Esophagus muscularis mucosa (tissue), 4 donors: ENCODE measurements at regions of chr2 and their contacts with region 1.

Region 1: GRCh38 chr2:239401067-239401880 is 454 bp upstream of the HDAC4 start:
- DNase-seq: peak; percentile 100
- H3K4me3 ChIP-seq: peak overlapping the region; percentile 57 to 86 (median 76)
- H3K27ac ChIP-seq: peak overlapping the region; percentile 97 to 100 (median 100)
- H3K4me1 ChIP-seq: peaks cover 31 to 47% (median 42%) of the 10 kb centered on the region in 4 donors
- H3K27me3 ChIP-seq: no peaks in the 10 kb centered on the region
- CTCF ChIP-seq: no peak
- EP300 ChIP-seq: no peak
- POLR2A ChIP-seq: peak; percentile 97

Region 2: DNA sequence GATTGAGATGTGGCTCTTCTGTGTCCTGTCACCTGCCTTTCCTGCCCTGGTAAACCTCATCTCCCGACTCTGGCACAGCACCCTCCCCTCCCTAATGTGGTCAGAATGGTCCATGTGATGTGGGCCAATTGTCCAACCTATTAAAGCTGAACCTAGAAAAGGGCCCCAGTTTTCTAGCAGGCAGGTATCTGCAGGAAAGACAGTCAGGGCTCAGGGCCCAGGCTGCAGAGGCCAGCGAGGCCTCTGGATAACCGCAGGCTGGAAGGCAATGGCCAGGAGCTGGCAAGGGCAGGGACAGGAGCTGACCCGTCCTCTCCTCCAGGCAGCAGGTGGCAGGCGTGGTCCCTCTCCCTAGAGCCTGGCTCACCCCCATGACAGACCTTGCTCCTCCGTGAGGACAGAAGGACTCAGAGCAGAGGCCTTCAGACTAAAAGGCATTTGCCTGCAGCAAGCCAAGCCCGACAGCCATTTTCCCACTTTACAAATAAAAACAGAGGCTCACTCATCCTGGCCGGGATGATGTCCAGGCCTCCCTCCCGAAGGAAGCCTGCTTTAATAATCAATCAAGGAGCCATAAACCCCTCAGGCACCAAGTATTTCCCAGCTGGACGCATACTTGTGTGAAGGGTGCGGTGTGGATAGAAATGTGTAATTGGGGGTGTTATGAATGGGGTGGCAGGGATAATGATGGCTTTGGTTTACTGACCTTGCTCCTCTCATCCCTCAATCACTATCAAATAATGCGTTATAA is 446.3 kb before region 1 on chr2:
- intact Hi-C with region 1: no loop called
- DNase-seq: peak; percentile 57
- H3K4me3 ChIP-seq: no peak overlapping the region
- H3K27ac ChIP-seq: no peak overlapping the region
- H3K4me1 ChIP-seq: peaks cover 0 to 5% (median 0%) of the 10 kb centered on the region in 4 donors
- H3K27me3 ChIP-seq: peaks cover 0 to 5% (median 0%) of the 10 kb centered on the region in 4 donors
- CTCF ChIP-seq: no peak
- EP300 ChIP-seq: no peak
- POLR2A ChIP-seq: no peak

Region 3: GRCh38 chr2:239143858-239144718 is 257.2 kb before region 1 on chr2:
- intact Hi-C with region 1: loop called (anchors 10 kb)
- DNase-seq: no peak
- H3K4me3 ChIP-seq: no peak overlapping the region
- H3K27ac ChIP-seq: peak overlapping the region in 3 of 4 donors; percentile 20 to 56 (median 44)
- H3K4me1 ChIP-seq: peaks cover 0 to 30% (median 14%) of the 10 kb centered on the region in 4 donors
- H3K27me3 ChIP-seq: no peaks in the 10 kb centered on the region
- CTCF ChIP-seq: peak; percentile 65 to 70 (median 69)
- EP300 ChIP-seq: no peak
- POLR2A ChIP-seq: no peak

Region 4: GRCh38 chr2:239318790-239319661 is 82.2 kb before region 1 on chr2:
- intact Hi-C with region 1: loop called (anchors 5 kb)
- DNase-seq: no peak
- H3K4me3 ChIP-seq: peak overlapping the region; percentile 36 to 56 (median 44)
- H3K27ac ChIP-seq: peak overlapping the region; percentile 80 to 85 (median 85)
- H3K4me1 ChIP-seq: peaks cover 52 to 77% (median 75%) of the 10 kb centered on the region in 4 donors
- H3K27me3 ChIP-seq: no peaks in the 10 kb centered on the region
- CTCF ChIP-seq: no peak
- EP300 ChIP-seq: no peak
- POLR2A ChIP-seq: no peak

Region 5: GRCh38 chr2:239361311-239361642 is 40.0 kb before region 1 on chr2:
- intact Hi-C with region 1: loop called (anchors 5 kb)
- DNase-seq: no peak
- H3K4me3 ChIP-seq: no peak overlapping the region
- H3K27ac ChIP-seq: peak overlapping the region in 2 of 4 donors; percentile 10 to 24
- H3K4me1 ChIP-seq: peaks cover 20 to 80% (median 58%) of the 10 kb centered on the region in 4 donors
- H3K27me3 ChIP-seq: no peaks in the 10 kb centered on the region
- CTCF ChIP-seq: peak in 2 of 3 experiments; percentile 43 to 48
- EP300 ChIP-seq: no peak
- POLR2A ChIP-seq: no peak

Region 6: GRCh38 chr2:239882331-239882732 is 481.1 kb after region 1 on chr2:
- intact Hi-C with region 1: loop called (anchors 10 kb)
- DNase-seq: peak; percentile 75
- H3K4me3 ChIP-seq: no peak overlapping the region
- H3K27ac ChIP-seq: peak overlapping the region; percentile 44 to 76 (median 62)
- H3K4me1 ChIP-seq: peaks cover 5 to 19% (median 18%) of the 10 kb centered on the region in 4 donors
- H3K27me3 ChIP-seq: no peaks in the 10 kb centered on the region
- CTCF ChIP-seq: peak; percentile 60 to 74 (median 73)
- EP300 ChIP-seq: no peak
- POLR2A ChIP-seq: no peak